IMR-90 (cell line): ENCODE measurements at regions of chr11 and their contacts with region 1.

Region 1: DNA sequence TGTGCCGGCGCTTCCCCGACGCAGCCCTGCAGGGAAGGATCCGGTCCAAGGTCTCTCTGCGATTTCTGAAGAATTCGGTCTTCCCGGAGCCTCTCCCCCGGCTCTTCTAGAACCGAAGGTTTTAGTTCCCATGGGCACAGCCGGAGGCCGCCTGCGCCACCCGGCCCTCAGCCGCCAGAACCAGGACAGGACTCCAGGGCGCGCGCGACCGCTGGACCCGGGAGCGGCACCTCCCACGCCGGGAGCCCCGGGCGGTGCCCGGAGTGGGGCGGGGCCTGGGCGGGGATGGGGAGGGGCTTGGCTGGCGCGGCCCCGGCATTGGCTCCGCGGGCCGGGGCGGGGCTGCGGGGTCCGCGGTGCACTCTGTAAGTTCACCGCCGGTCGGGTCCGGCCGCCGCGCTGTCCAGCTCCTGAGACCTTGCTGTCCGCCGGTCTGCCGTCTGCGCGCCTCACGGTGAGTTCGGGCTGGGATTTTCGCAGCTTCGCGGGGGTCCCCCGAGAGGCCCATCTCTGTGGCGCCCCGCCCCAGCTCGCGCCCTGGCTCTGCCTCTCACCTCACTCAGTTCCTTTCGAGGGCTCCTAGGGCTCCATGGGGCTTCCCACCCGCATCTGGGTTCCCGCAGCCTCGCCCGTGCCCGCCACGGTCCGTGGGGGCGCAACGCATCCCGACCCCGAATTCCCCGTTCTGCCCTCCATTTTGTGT is at the start of gene CDC42EP2:
- DNase-seq: peak; percentile 80
- ATAC-seq: peak; percentile 89
- H3K4me3 ChIP-seq: peak within 1 kb of the TSS; percentile 96
- H3K27ac ChIP-seq: peak within 1 kb of the TSS; percentile 91
- H3K4me1 ChIP-seq: peaks cover 27% of the 10 kb centered on the region
- H3K27me3 ChIP-seq: no peaks in the 10 kb centered on the region
- CTCF ChIP-seq: no peak
- POLR2A ChIP-seq: peak; percentile 95
- RAD21 ChIP-seq: no peak
- total RNA-seq, gene CDC42EP2: 5.2 and 5.3 TPM in 2 replicates

Region 2: GRCh38 chr11:65274735-65275682 is 39.6 kb before region 1 on chr11:
- CTCF ChIA-PET with region 1: interaction called, 64 read pairs
- POLR2A ChIA-PET with region 1: interaction called, 16 read pairs
- dilution Hi-C with region 1: no loop called
- in situ Hi-C with region 1: loop called (anchors 5 kb)
- intact Hi-C with region 1: loop called (anchors 1 kb)
- DNase-seq: peak; percentile 99
- ATAC-seq: peak; percentile 89
- H3K4me3 ChIP-seq: peak overlapping the region; percentile 1; the same call in 1 of the 2 replicates
- H3K27ac ChIP-seq: peak overlapping the region; percentile 36; the same call in 1 of the 2 replicates
- H3K4me1 ChIP-seq: peaks cover 19% of the 10 kb centered on the region
- H3K27me3 ChIP-seq: no peaks in the 10 kb centered on the region
- CTCF ChIP-seq: peak; percentile 98
- POLR2A ChIP-seq: peak; percentile 67
- RAD21 ChIP-seq: peak; percentile 99

Region 3: DNA sequence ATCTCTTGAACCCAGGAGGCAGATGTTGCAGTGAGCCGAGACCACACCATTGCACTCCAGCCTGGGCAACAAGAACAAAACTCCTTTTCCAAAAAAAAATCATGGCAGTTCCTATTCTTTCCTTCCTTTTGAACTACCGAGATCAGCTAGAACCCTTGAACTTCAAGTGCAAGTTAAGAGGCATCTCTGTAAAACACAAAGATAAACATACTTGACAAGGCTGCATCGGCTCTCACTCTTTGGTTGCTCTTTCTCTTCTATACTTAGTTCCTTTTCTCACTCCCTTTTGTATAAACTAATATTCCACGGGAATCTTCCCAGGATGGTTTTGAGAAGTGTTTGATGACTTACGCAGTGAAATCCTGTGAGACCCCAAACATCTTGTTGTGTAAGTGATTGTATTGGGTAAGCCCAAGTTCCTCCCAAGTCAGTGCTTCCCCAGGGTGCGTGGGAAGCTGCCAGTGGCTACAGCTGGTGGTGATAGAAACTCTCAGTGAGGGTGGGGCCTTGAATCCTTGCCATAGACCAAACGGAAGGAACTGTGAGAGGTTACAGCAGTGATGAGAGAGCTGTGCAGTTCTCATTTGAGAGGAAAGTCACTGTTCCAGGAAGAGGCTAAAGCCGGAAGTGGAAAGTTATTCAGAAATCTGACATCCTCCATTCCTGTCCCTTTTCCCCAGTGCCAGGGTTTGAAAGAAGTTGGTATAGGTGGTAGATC is 24.0 kb before region 1 on chr11:
- CTCF ChIA-PET with region 1: interaction called, 44 read pairs
- POLR2A ChIA-PET with region 1: interaction called, 8 read pairs
- dilution Hi-C with region 1: no loop called
- in situ Hi-C with region 1: no loop called
- intact Hi-C with region 1: loop called (anchors 1 kb)
- DNase-seq: peak; percentile 100
- ATAC-seq: peak; percentile 62
- H3K4me3 ChIP-seq: no peak overlapping the region; the same call in 1 of the 2 replicates
- H3K27ac ChIP-seq: peak overlapping the region; percentile 94
- H3K4me1 ChIP-seq: peaks cover 27% of the 10 kb centered on the region
- H3K27me3 ChIP-seq: no peaks in the 10 kb centered on the region
- CTCF ChIP-seq: no peak
- POLR2A ChIP-seq: peak; percentile 73; the same call in 1 of the 2 replicates
- RAD21 ChIP-seq: no peak

Region 4: DNA sequence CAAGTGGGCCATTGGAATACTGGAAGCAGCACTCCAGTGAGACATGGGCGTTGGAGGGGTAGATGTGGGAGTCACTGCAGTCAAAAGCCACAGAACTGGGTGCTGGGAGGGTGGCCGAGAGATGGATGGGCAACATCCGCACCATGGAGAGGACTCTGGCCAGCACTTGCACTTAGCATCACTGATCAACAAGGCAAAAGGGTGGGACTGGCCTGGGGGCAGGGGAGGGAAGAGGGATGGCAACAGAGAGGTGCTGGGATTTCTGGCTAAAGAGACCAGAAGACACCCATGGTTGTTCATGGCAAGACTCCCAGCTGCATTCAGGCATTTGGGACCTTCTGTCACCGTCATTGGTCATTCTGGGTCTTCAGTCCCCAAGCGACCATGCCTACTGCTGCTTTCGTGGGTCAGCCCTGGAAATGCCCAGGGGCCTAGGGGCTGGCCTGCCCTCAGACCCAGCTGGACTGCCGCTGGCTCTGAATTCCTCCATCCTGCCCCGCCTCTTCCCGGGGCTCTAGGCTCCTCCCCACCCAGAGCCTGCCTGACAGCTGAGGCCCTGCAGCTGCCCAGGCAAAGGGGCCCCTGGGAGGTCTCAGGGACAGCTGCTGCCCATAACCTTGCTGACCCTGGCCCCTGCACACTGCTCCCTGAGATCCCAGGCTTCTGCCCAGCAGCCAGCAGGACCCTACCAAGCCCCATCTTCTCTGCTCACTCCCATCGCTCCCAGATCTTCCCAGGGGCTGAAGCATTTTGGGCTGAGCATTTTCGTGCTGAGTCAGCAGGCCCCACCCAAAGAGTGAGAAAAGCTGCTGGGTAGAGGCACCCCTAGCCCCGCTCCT is 12.9 kb before region 1 on chr11:
- CTCF ChIA-PET with region 1: interaction called, 10 read pairs
- POLR2A ChIA-PET with region 1: interaction called, 5 read pairs
- dilution Hi-C with region 1: no loop called
- in situ Hi-C with region 1: no loop called
- intact Hi-C with region 1: no loop called
- DNase-seq: peak; percentile 50
- ATAC-seq: peak; percentile 80
- H3K4me3 ChIP-seq: no peak overlapping the region
- H3K27ac ChIP-seq: peak overlapping the region; percentile 57
- H3K4me1 ChIP-seq: peaks cover 54% of the 10 kb centered on the region
- H3K27me3 ChIP-seq: no peaks in the 10 kb centered on the region
- CTCF ChIP-seq: no peak
- POLR2A ChIP-seq: no peak
- RAD21 ChIP-seq: no peak

Region 5: DNA sequence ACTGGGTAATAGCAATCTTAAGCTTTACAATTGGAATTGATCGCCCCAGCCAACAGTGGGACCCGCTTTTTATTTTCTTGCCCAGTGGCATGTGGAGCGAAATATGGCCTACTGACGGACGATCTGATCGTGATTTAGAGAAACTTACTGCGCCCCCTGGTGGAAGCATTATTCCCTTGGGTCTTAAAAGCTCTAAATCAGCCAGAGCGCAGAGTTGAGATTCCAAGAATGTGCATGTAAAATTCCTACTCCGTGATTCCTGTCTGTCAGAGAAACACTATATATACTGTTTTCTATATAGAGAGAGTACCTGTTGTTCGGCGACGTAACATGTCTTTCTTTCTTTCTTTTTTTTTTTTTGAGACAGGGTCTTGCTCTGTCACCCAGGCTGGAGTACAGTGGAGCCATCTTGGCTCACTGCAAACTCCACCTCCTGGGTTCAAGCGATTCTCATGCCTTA is 15.3 kb after region 1 on chr11:
- CTCF ChIA-PET with region 1: interaction called, 66 read pairs
- POLR2A ChIA-PET with region 1: no interaction called
- dilution Hi-C with region 1: no loop called
- in situ Hi-C with region 1: no loop called
- intact Hi-C with region 1: no loop called
- DNase-seq: peak; percentile 92
- ATAC-seq: peak; percentile 28
- H3K4me3 ChIP-seq: no peak overlapping the region
- H3K27ac ChIP-seq: no peak overlapping the region
- H3K4me1 ChIP-seq: no peaks in the 10 kb centered on the region; the same call in 1 of the 2 replicates
- H3K27me3 ChIP-seq: no peaks in the 10 kb centered on the region
- CTCF ChIP-seq: peak; percentile 85
- POLR2A ChIP-seq: peak; percentile 56
- RAD21 ChIP-seq: peak; percentile 68

Region 6: GRCh38 chr11:65355013-65355775 is 40.5 kb after region 1 on chr11:
- CTCF ChIA-PET with region 1: no interaction called
- POLR2A ChIA-PET with region 1: no interaction called
- dilution Hi-C with region 1: no loop called
- in situ Hi-C with region 1: no loop called
- intact Hi-C with region 1: loop called (anchors 1 kb)
- DNase-seq: no peak
- ATAC-seq: no peak
- H3K4me3 ChIP-seq: peak overlapping the region; percentile 72
- H3K27ac ChIP-seq: no peak overlapping the region
- H3K4me1 ChIP-seq: peaks cover 8% of the 10 kb centered on the region
- H3K27me3 ChIP-seq: peaks cover 22% of the 10 kb centered on the region
- CTCF ChIP-seq: no peak
- POLR2A ChIP-seq: no peak
- RAD21 ChIP-seq: no peak

Region 7: GRCh38 chr11:65540297-65541092 is 225.8 kb after region 1 on chr11:
- CTCF ChIA-PET with region 1: no interaction called
- POLR2A ChIA-PET with region 1: no interaction called
- dilution Hi-C with region 1: no loop called
- in situ Hi-C with region 1: no loop called
- intact Hi-C with region 1: no loop called
- DNase-seq: peak; percentile 82
- ATAC-seq: peak; percentile 94
- H3K4me3 ChIP-seq: peak overlapping the region; percentile 59
- H3K27ac ChIP-seq: peak overlapping the region; percentile 73
- H3K4me1 ChIP-seq: peaks cover 5% of the 10 kb centered on the region; the same call in 1 of the 2 replicates
- H3K27me3 ChIP-seq: no peaks in the 10 kb centered on the region
- CTCF ChIP-seq: peak; percentile 88
- POLR2A ChIP-seq: no peak
- RAD21 ChIP-seq: peak; percentile 77